ENCODE measurements at regions of chr16 and their contacts with region 1.

Region 1: GRCh38 chr16:69123910-69124309 is 8.5 kb downstream of the CHTF8 start:
- DNase-seq: peak; percentile 46
- H3K4me3 ChIP-seq: no peak overlapping the region
- H3K27ac ChIP-seq: no peak overlapping the region
- H3K27me3 ChIP-seq: no peaks in the 10 kb centered on the region
- CTCF ChIP-seq: peak; percentile 64

Region 2: DNA sequence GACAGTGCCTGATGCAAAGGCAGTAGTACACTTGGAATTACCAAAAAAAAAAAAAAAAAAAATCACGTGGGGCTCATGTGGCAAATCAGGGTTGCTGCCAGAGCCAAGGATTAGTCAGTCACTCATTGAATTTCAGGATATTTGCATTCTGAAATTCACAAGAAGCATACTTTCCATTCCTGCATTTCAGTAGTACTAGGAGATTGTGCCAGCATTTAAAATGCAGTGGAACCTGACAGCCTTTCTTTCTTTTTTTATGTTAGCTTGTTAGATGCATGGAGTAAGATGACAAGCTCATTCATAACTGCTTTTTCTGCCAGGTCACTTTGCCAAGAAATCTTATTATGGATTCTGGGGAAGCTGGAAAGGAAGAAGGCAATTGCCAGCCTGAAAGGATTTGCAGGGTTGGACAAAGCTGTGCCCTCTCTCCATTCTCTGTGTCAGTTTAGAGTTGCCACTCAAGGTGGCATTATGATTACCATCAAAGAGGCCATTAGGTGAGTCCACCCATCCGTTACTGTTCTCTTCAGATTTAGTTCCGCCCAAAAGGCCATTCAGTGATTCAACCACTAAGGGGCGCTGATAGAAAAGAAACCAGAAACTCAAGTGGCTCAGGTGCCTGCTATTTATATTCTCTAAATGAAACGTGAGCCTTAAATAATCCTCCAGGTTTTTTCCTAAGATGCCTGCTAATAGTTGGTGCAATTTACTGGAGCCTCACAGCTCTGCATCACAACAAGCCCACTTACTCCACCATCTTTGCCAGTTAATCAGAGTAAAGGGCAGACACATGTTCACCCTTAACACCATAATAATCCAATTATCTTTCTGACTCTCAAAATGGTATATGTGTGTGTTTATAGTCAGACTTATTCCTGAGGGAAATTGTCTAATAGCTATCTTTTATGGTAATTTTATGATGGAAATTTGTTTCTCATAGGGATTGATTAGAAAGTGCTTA is 221.6 kb before region 1 on chr16:
- in situ Hi-C with region 1: loop called (anchors 25 kb)
- DNase-seq: peak; percentile 51
- H3K4me3 ChIP-seq: no peak overlapping the region
- H3K27ac ChIP-seq: no peak overlapping the region
- H3K27me3 ChIP-seq: no peaks in the 10 kb centered on the region
- CTCF ChIP-seq: peak; percentile 80

Region 3: DNA sequence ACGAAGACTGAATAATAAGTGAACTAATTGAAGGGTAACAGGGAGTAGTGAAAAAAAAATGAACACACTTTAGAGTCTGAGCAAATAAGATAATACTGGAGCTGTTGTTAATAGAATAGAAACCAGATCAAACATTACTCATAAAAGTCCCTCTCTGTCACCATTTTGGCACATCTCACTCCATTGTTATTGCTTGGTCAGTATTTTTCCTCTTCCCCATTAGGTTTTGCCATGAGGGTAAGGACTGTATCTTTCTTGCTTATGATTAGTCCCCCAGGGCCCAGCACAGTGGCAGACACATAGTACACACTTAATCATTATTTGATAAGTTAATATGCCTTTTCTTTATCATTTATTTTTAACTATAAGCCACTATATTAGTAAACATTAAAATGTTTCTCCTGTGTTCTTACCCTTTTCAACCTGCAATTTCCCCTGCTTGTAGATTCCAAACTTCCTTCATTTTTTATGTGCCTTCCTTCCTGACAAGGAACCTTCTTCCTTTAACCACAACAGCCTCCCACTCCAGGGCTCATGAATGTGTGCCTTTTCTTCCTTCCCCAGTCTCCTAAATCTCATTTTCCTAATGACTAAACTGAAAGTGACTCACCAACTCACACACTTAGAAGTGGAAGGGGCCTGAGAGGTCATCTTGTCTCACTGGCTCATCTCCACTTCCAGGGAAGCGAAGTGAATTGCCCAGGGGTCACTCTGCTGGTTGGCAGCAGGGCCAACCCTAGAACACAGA is 106.7 kb before region 1 on chr16:
- in situ Hi-C with region 1: loop called (anchors 25 kb)
- DNase-seq: peak; percentile 54
- H3K4me3 ChIP-seq: no peak overlapping the region
- H3K27ac ChIP-seq: peak overlapping the region; percentile 7
- H3K27me3 ChIP-seq: no peaks in the 10 kb centered on the region
- CTCF ChIP-seq: no peak

Region 4: GRCh38 chr16:69089091-69089910 is 34.6 kb before region 1 on chr16:
- in situ Hi-C with region 1: no loop called
- DNase-seq: peak; percentile 10
- H3K4me3 ChIP-seq: no peak overlapping the region
- H3K27ac ChIP-seq: no peak overlapping the region
- H3K27me3 ChIP-seq: no peaks in the 10 kb centered on the region
- CTCF ChIP-seq: no peak